CD4-positive, alpha-beta memory T cell (primary cell): ENCODE measurements at regions of chr19 and their contacts with region 1.

Region 1: GRCh38 chr19:17496337-17496997 is 15.0 kb upstream of the PGLS start:
- DNase-seq: peak; percentile 69 to 77 (median 72)
- H3K4me3 ChIP-seq: no peak overlapping the region
- H3K4me3 Mint-ChIP-seq: peak overlapping the region in 1 of 8 donors; percentile 23
- H3K27ac ChIP-seq: no peak overlapping the region
- H3K27ac Mint-ChIP-seq: peak overlapping the region in 2 of 7 donors; percentile 59 to 76
- H3K4me1 ChIP-seq: peaks cover 15% of the 10 kb centered on the region
- H3K4me1 Mint-ChIP-seq: peaks cover 10 to 21% (median 16%) of the 10 kb centered on the region in 4 donors
- H3K27me3 ChIP-seq: no peaks in the 10 kb centered on the region
- H3K27me3 Mint-ChIP-seq: no peaks in the 10 kb centered on the region

Region 2: DNA sequence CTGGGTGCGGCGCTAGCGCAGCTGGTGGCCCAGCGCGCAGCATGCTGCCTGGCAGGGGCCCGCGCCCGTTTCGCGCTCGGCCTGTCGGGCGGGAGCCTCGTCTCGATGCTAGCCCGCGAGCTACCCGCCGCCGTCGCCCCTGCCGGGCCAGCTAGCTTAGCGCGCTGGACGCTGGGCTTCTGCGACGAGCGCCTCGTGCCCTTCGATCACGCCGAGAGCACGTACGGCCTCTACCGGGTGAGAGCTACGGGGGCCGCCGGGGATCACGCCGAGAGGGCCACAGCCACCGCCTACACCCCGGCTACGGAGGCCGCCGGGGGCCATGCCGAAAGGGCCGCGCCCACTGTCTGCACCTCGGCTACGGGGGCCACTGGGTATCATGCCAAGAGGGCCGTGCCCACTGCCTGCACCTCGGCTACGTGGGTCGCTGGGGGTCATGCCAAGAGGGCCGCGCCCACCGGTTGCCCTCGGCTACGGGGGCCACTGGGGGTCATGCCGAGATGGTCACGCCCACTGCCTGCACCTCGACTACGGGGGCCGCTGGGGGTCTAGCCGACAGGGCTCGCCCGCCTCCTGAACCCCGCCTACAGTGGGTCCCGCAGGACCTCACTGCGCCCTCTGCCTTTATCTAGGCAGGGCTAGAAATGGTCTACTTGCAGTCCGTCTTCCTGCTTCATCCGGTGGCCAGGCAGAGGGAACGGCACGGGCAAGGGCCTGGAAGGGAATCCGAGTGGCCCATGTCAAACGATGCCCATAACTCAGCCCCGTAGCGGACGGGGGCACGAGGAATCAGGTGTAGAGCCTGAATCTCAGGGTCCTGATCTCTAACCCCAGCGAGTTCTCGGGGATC is 15.5 kb after region 1 on chr19:
- CTCF ChIA-PET with region 1: interaction called, 37 read pairs
- POLR2A ChIA-PET with region 1: interaction called, 8 read pairs
- intact Hi-C with region 1: no loop called
- DNase-seq: peak; percentile 86 to 90 (median 88)
- H3K4me3 ChIP-seq: peak overlapping the region; percentile 50 to 96
- H3K4me3 Mint-ChIP-seq: peak overlapping the region; percentile 88 to 100 (median 98)
- H3K27ac ChIP-seq: peak overlapping the region; percentile 92
- H3K27ac Mint-ChIP-seq: peak overlapping the region; percentile 90 to 98 (median 95)
- H3K4me1 ChIP-seq: peaks cover 20% of the 10 kb centered on the region
- H3K4me1 Mint-ChIP-seq: peaks cover 17 to 47% (median 30%) of the 10 kb centered on the region in 4 donors
- H3K27me3 ChIP-seq: no peaks in the 10 kb centered on the region
- H3K27me3 Mint-ChIP-seq: no peaks in the 10 kb centered on the region

Region 3: GRCh38 chr19:17555480-17555928 is 59.0 kb after region 1 on chr19 and contains the start of gene COLGALT1:
- CTCF ChIA-PET with region 1: interaction called, 11 read pairs
- POLR2A ChIA-PET with region 1: interaction called, 4 read pairs
- intact Hi-C with region 1: loop called (anchors 1 kb)
- DNase-seq: peak; percentile 94 to 98 (median 95)
- H3K4me3 ChIP-seq: peak within 1 kb of the TSS; percentile 54 to 80
- H3K4me3 Mint-ChIP-seq: peak within 1 kb of the TSS; percentile 83 to 89 (median 86)
- H3K27ac ChIP-seq: peak within 1 kb of the TSS; percentile 62
- H3K27ac Mint-ChIP-seq: peak within 1 kb of the TSS in 6 of 7 donors; percentile 63 to 92 (median 76)
- H3K4me1 ChIP-seq: peaks cover 18% of the 10 kb centered on the region
- H3K4me1 Mint-ChIP-seq: peaks cover 8 to 25% (median 14%) of the 10 kb centered on the region in 4 donors
- H3K27me3 ChIP-seq: no peaks in the 10 kb centered on the region
- H3K27me3 Mint-ChIP-seq: no peaks in the 10 kb centered on the region
- total RNA-seq, gene COLGALT1: 68.3 to 74.7 TPM

Region 4: DNA sequence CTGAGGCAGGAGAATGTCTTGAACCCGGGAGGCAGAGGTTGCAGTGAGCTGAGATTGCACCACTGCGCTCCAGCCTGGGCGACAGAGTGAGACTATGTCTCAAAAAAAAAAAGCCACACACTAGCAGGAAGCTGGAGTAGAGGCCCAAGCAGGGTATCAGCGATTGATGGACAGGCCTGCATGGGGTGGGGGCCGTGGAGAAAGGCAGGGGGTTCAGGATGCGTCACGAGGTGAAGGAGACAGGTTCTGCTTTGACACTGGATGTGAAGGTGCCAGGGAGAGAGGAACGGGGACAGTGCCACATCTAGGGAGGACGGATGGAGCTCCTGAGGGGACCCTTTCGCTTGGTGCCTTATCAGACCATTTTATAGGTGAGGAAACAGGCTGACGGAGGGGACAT is 66.1 kb after region 1 on chr19:
- CTCF ChIA-PET with region 1: interaction called, 11 read pairs
- POLR2A ChIA-PET with region 1: interaction called, 4 read pairs
- intact Hi-C with region 1: no loop called
- DNase-seq: no peak
- H3K4me3 ChIP-seq: no peak overlapping the region
- H3K4me3 Mint-ChIP-seq: peak overlapping the region in 1 of 8 donors; percentile 6
- H3K27ac ChIP-seq: no peak overlapping the region
- H3K27ac Mint-ChIP-seq: peak overlapping the region in 2 of 7 donors; percentile 9 to 70
- H3K4me1 ChIP-seq: no peaks in the 10 kb centered on the region
- H3K4me1 Mint-ChIP-seq: peaks cover 0 to 10% (median 4%) of the 10 kb centered on the region in 4 donors
- H3K27me3 ChIP-seq: no peaks in the 10 kb centered on the region
- H3K27me3 Mint-ChIP-seq: no peaks in the 10 kb centered on the region

Region 5: GRCh38 chr19:17579661-17580244 is 83.3 kb after region 1 on chr19:
- CTCF ChIA-PET with region 1: interaction called, 99 read pairs
- POLR2A ChIA-PET with region 1: no interaction called
- intact Hi-C with region 1: loop called (anchors 1 kb)
- DNase-seq: peak in 2 of 5 donors; percentile 8 to 11
- H3K4me3 ChIP-seq: no peak overlapping the region
- H3K4me3 Mint-ChIP-seq: no peak overlapping the region
- H3K27ac ChIP-seq: no peak overlapping the region
- H3K27ac Mint-ChIP-seq: peak overlapping the region in 1 of 7 donors; percentile 84
- H3K4me1 ChIP-seq: no peaks in the 10 kb centered on the region
- H3K4me1 Mint-ChIP-seq: peaks cover 0 to 4% (median under 1%) of the 10 kb centered on the region in 4 donors
- H3K27me3 ChIP-seq: no peaks in the 10 kb centered on the region
- H3K27me3 Mint-ChIP-seq: no peaks in the 10 kb centered on the region

Region 6: GRCh38 chr19:17605761-17606745 is 109.6 kb after region 1 on chr19:
- CTCF ChIA-PET with region 1: interaction called, 11 read pairs
- POLR2A ChIA-PET with region 1: no interaction called
- intact Hi-C with region 1: no loop called
- DNase-seq: peak; percentile 82 to 93 (median 87)
- H3K4me3 ChIP-seq: peak overlapping the region; percentile 17 to 54
- H3K4me3 Mint-ChIP-seq: peak overlapping the region; percentile 72 to 84 (median 81)
- H3K27ac ChIP-seq: peak overlapping the region; percentile 17
- H3K27ac Mint-ChIP-seq: peak overlapping the region; percentile 72 to 91 (median 82)
- H3K4me1 ChIP-seq: peaks cover 13% of the 10 kb centered on the region
- H3K4me1 Mint-ChIP-seq: peaks cover 7 to 11% (median 9%) of the 10 kb centered on the region in 4 donors
- H3K27me3 ChIP-seq: peaks cover 8% of the 10 kb centered on the region
- H3K27me3 Mint-ChIP-seq: peaks cover 25 to 35% of the 10 kb centered on the region in 2 donors